Activated CD4-positive, alpha-beta T cell treated with anti-CD3 and anti-CD28 coated beads for 36 hours (primary cell): ENCODE measurements at regions of chr19 and their contacts with region 1.

Region 1: GRCh38 chr19:32691291-32691951 is at the start of gene NUDT19:
- DNase-seq: peak; percentile 91
- ATAC-seq: peak; percentile 83
- H3K4me3 Mint-ChIP-seq: peak within 1 kb of the TSS; percentile 83
- H3K27ac Mint-ChIP-seq: peak within 1 kb of the TSS; percentile 92
- H3K4me1 Mint-ChIP-seq: peaks cover 56% of the 10 kb centered on the region
- H3K27me3 Mint-ChIP-seq: no peaks in the 10 kb centered on the region
- total RNA-seq, gene NUDT19: 14.7 to 17.7 TPM

Region 2: DNA sequence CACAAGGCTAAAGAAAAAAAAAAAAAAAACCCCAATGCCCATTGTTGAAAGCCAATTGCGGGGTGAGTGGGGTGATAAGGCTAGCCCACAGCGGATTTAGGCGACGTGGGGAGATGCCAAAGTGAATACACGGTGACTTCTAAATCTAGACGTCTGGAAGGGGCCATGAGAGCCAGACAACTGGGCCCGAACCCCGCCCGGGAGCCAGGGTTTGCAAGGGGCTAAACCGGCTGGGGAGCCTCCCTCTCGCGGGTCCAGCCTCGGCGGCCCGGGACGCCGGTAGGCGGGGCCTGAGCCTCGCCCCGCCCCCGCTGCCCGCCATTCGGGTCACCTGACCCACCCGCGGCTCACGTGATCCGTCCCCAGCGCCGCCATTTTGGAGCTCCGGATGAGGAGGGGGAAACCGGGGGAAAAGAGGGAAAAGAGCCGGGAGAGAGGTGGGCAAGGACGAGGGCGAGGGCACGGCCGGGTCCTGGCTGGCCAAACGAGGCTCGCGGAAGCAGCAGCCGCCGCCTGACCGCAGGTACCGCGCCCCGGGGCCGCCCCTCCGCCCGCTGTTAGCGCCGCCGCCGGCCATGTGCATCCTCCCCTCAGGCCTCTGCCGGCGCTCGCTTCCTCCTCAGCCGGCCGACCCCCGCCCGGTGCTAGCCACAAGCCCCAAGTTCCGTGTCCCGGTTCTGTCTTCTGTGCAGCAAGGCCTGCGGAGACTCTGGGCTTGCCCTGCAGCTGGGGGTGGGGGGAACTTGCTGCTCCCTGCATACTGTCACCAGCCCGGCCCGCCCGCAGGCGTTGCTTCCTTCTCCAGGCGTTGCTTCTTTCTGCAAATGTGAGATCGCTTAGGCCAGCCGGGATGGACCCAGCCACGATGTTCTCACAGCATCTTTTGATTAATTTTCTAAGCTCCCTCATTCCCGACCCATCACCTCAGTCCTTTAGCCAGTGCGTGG is 345.9 kb before region 1 on chr19 and contains the start of gene ZNF507:
- CTCF ChIA-PET with region 1: no interaction called
- POLR2A ChIA-PET with region 1: no interaction called
- intact Hi-C with region 1: loop called in 1 of 2 experiments (anchors 5 kb)
- DNase-seq: peak; percentile 93
- ATAC-seq: peak; percentile 82
- H3K4me3 Mint-ChIP-seq: peak within 1 kb of the TSS; percentile 92
- H3K27ac Mint-ChIP-seq: peak within 1 kb of the TSS; percentile 95
- H3K4me1 Mint-ChIP-seq: peaks cover 42% of the 10 kb centered on the region
- H3K27me3 Mint-ChIP-seq: peaks cover 2% of the 10 kb centered on the region
- total RNA-seq, gene ZNF507: 25.2 to 27.6 TPM

Region 3: GRCh38 chr19:32599736-32600157 is 91.7 kb before region 1 on chr19:
- CTCF ChIA-PET with region 1: no interaction called
- POLR2A ChIA-PET with region 1: no interaction called
- intact Hi-C with region 1: loop called in 1 of 2 experiments (anchors 5 kb)
- DNase-seq: peak; percentile 62
- ATAC-seq: peak; percentile 66
- H3K4me3 Mint-ChIP-seq: no peak overlapping the region
- H3K27ac Mint-ChIP-seq: no peak overlapping the region
- H3K4me1 Mint-ChIP-seq: peaks cover 7% of the 10 kb centered on the region
- H3K27me3 Mint-ChIP-seq: no peaks in the 10 kb centered on the region

Region 4: GRCh38 chr19:32735936-32736335 is 44.5 kb after region 1 on chr19:
- CTCF ChIA-PET with region 1: no interaction called
- POLR2A ChIA-PET with region 1: no interaction called
- intact Hi-C with region 1: no loop called
- DNase-seq: no peak
- ATAC-seq: no peak
- H3K4me3 Mint-ChIP-seq: no peak overlapping the region
- H3K27ac Mint-ChIP-seq: no peak overlapping the region
- H3K4me1 Mint-ChIP-seq: no peaks in the 10 kb centered on the region
- H3K27me3 Mint-ChIP-seq: peaks cover 14% of the 10 kb centered on the region

Region 5: DNA sequence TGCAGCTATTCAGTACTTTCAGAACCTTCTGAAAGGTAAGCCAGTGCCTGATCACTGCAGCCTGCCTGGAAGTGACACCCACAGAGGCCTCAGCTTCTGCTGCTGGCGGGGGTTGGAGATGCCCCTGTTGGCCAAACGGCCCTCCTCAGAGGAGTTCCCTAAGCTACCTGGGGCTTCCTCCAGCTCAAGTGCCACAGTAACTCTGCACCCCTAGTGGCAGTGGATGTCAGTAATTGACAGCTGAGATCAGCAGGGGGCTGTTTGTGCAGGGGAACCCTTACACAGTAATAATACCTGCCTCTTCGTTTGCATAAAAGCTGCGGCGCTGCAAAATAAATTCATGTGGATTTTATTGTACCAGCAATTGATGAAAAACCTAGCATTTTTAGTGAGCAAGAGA is 57.1 kb after region 1 on chr19:
- CTCF ChIA-PET with region 1: no interaction called
- POLR2A ChIA-PET with region 1: no interaction called
- intact Hi-C with region 1: loop called (anchors 1 to 2 kb)
- DNase-seq: peak; percentile 18
- ATAC-seq: no peak
- H3K4me3 Mint-ChIP-seq: no peak overlapping the region
- H3K27ac Mint-ChIP-seq: no peak overlapping the region
- H3K4me1 Mint-ChIP-seq: peaks cover 10% of the 10 kb centered on the region
- H3K27me3 Mint-ChIP-seq: peaks cover 19% of the 10 kb centered on the region

Region 6: DNA sequence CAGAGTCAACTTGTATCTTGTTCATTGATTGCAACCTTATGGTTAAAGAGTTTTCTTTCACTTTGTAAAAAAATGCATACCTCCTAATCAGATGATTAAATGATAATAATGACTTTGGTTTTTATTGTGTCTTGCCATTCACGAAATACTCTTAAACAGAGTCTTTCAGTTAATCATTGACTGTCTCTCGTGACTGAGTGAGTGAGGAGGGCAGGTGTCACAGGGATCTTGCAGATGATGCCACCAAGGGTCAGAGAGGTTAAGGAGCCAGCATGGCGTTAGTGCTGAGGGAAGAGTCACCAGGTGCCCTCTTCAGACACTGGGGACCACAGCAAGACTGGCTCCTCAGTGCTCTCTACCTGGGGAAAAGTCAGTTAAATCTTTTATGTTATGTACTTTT is 397.6 kb after region 1 on chr19:
- CTCF ChIA-PET with region 1: no interaction called
- POLR2A ChIA-PET with region 1: no interaction called
- intact Hi-C with region 1: no loop called
- DNase-seq: no peak
- ATAC-seq: no peak
- H3K4me3 Mint-ChIP-seq: no peak overlapping the region
- H3K27ac Mint-ChIP-seq: no peak overlapping the region
- H3K4me1 Mint-ChIP-seq: no peaks in the 10 kb centered on the region
- H3K27me3 Mint-ChIP-seq: no peaks in the 10 kb centered on the region

Region 7: DNA sequence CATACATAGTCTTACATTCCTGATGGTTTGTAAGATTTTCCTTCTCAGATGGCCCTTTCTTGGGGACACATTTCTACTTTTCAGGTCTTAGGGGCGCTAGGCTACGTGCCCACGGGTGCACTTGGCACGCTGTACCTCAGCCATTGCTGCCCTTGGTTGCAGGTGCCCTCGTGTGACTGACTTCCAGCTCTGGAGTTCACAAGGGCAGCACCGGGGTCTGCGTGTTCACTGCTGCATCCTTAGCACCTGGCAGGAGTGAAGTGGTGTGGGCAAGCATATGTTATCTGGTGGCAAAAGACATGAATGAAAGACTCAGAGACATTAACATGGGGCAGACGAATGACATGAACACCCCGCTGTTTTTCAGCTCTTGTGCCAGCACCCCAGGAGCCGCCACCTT is 427.2 kb after region 1 on chr19:
- CTCF ChIA-PET with region 1: interaction called, 3 read pairs
- POLR2A ChIA-PET with region 1: no interaction called
- intact Hi-C with region 1: loop called in 1 of 2 experiments (anchors 5 kb)
- DNase-seq: no peak
- ATAC-seq: no peak
- H3K4me3 Mint-ChIP-seq: no peak overlapping the region
- H3K27ac Mint-ChIP-seq: no peak overlapping the region
- H3K4me1 Mint-ChIP-seq: no peaks in the 10 kb centered on the region
- H3K27me3 Mint-ChIP-seq: no peaks in the 10 kb centered on the region